ENCODE measurements at regions of chr3 and their contacts with region 1.

Region 1: DNA sequence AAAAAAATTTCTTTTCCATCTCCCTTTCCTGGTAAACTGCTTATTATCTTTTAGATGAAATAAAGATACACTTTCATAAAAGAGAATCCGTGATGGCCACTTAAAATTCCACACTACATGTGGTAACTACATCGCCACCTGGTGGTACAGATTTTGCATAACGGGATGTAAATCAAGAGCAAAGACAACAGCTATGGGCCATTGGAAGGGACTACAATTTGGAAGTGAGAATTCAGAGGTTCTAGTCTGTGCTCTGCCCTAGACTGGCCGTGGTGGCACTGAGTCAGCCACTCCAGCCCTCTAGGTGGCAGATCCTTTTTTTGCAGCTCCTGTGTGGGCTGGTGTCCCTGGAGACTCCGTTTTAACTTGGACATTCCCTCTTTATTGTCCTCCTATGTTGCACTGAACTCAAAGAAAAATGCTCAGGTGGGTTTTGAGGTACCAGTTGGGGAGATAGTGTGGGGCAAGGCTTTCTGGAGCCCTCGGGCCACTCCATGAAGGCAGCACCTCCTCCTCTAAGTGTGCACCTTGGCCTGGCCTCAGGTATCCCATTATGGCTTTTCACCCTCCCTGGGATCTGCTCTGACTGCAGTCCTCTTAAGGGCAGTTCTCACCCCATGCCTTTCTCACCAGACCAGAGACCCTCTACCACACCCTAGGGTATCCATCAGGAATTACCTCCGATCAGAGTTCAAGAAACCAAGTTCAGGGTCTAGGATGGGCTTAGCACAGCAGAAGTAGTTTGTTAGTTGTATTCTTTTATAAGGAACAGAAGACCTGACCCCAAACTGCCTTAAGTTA is 54.9 kb downstream of the SPSB4 start:
- DNase-seq: peak; percentile 72
- ATAC-seq: peak; percentile 80
- H3K4me3 Mint-ChIP-seq: no peak overlapping the region
- H3K27ac Mint-ChIP-seq: no peak overlapping the region; the same call in 1 of the 2 replicates
- H3K4me1 Mint-ChIP-seq: peaks cover 34% of the 10 kb centered on the region
- H3K27me3 Mint-ChIP-seq: no peaks in the 10 kb centered on the region; the same call in 1 of the 2 replicates
- CTCF ChIP-seq: peak; percentile 44

Region 2: DNA sequence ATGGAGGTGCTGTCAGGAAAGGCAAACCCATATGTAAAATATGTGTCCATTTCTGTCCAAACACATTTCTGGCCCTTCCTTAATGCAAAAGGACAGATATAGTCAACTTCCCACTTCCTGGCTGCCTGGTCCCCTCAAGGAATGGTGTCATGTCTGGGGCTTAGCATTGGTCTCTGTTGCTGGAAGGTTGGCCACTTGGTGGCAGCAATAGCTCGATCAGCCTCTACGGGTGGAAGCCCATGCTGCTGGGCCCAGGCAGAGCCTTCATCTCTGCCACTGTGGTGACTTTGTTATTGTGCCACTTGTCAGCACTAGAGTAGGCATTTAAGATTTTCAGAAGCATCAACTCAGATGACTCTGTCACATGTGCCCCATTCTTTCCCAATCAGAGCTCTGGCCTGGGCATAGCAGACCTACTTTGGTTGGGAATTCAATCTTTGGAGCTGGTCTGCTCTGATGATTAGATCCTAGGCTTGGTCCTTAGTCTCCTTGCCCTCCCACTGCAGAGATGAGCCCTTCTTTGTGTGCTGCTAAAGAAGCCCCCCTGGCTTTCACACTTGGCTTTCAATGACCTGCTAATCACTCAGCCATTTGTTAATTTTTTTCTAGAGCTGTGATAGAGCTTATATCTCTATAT is 105.9 kb before region 1 on chr3:
- CTCF ChIA-PET with region 1: interaction called, 12 read pairs
- POLR2A ChIA-PET with region 1: no interaction called
- DNase-seq: peak; percentile 77
- ATAC-seq: peak; percentile 99
- H3K4me3 Mint-ChIP-seq: no peak overlapping the region
- H3K27ac Mint-ChIP-seq: no peak overlapping the region
- H3K4me1 Mint-ChIP-seq: no peaks in the 10 kb centered on the region
- H3K27me3 Mint-ChIP-seq: no peaks in the 10 kb centered on the region
- CTCF ChIP-seq: peak; percentile 26; the same call in 1 of the 2 replicates

Region 3: DNA sequence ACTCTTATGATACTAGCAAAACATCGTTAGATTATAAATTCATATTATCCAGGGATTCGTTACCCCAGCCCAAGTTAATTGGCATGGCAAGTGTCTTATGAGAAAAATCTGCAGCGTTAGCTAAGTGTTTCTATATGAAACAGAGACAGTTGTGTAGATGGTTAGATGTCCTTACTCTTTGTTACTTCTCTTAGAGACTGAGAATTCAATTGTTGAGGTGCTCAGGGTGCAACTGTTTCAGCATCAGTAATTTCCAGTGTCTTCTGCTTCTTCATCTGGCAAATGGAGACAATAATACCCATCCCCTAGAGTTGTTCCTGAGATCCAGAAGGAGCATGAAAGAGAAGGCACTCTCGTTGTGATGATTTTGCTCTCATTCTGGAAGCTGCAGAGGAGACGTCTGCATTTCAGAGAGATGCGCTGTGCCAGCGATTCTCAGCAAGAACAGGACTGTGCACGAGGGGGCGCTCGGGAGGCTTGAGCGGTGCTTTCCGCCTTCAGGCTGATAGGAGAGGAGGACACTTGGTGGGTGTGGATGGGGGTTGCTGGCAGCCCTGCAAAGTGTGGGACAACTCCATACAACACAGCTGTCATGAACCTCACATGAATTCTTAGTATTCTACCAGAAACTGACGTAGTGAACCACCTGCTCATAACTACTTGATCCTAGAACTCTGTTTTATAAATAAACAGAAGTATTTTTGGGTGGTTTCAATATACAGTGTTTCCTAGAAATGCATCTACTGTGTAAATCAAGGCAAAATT is 94.6 kb before region 1 on chr3:
- CTCF ChIA-PET with region 1: interaction called, 40 read pairs
- POLR2A ChIA-PET with region 1: no interaction called
- DNase-seq: peak; percentile 95
- ATAC-seq: peak; percentile 96
- H3K4me3 Mint-ChIP-seq: no peak overlapping the region
- H3K27ac Mint-ChIP-seq: no peak overlapping the region
- H3K4me1 Mint-ChIP-seq: peaks cover 24% of the 10 kb centered on the region
- H3K27me3 Mint-ChIP-seq: no peaks in the 10 kb centered on the region; the same call in 1 of the 2 replicates
- CTCF ChIP-seq: peak; percentile 81

Region 4: GRCh38 chr3:141076797-141077571 is 29.0 kb before region 1 on chr3:
- CTCF ChIA-PET with region 1: interaction called, 16 read pairs
- POLR2A ChIA-PET with region 1: no interaction called
- DNase-seq: peak; percentile 45
- ATAC-seq: peak; percentile 9
- H3K4me3 Mint-ChIP-seq: 0 out of 2 replicates have a peak overlapping the region, but pooled peaks have one; percentile 6
- H3K27ac Mint-ChIP-seq: peak overlapping the region; percentile 89
- H3K4me1 Mint-ChIP-seq: peaks cover 95% of the 10 kb centered on the region
- H3K27me3 Mint-ChIP-seq: peaks cover 1% of the 10 kb centered on the region; the same call in 1 of the 2 replicates
- CTCF ChIP-seq: no peak

Region 5: GRCh38 chr3:141084250-141084649 is 21.8 kb before region 1 on chr3:
- CTCF ChIA-PET with region 1: interaction called, 14 read pairs
- POLR2A ChIA-PET with region 1: no interaction called
- DNase-seq: no peak
- ATAC-seq: no peak
- H3K4me3 Mint-ChIP-seq: no peak overlapping the region
- H3K27ac Mint-ChIP-seq: no peak overlapping the region
- H3K4me1 Mint-ChIP-seq: peaks cover 91% of the 10 kb centered on the region
- H3K27me3 Mint-ChIP-seq: no peaks in the 10 kb centered on the region
- CTCF ChIP-seq: no peak

Region 6: GRCh38 chr3:141094790-141095545 is 11.1 kb before region 1 on chr3:
- CTCF ChIA-PET with region 1: interaction called, 14 read pairs
- POLR2A ChIA-PET with region 1: no interaction called
- DNase-seq: no peak
- ATAC-seq: peak; percentile 38
- H3K4me3 Mint-ChIP-seq: no peak overlapping the region
- H3K27ac Mint-ChIP-seq: 0 out of 2 replicates have a peak overlapping the region, but pooled peaks have one; percentile 33
- H3K4me1 Mint-ChIP-seq: peaks cover 55% of the 10 kb centered on the region
- H3K27me3 Mint-ChIP-seq: no peaks in the 10 kb centered on the region
- CTCF ChIP-seq: no peak

Region 7: GRCh38 chr3:141143517-141143916 is 37.5 kb after region 1 on chr3:
- CTCF ChIA-PET with region 1: no interaction called
- POLR2A ChIA-PET with region 1: no interaction called
- DNase-seq: no peak
- ATAC-seq: no peak
- H3K4me3 Mint-ChIP-seq: no peak overlapping the region
- H3K27ac Mint-ChIP-seq: no peak overlapping the region
- H3K4me1 Mint-ChIP-seq: peaks cover 10% of the 10 kb centered on the region
- H3K27me3 Mint-ChIP-seq: peaks cover 13% of the 10 kb centered on the region
- CTCF ChIP-seq: no peak